Activated naive CD4-positive, alpha-beta T cell treated with anti-CD3 and anti-CD28 coated beads, Interleukin-2, amount 10 ng/mL, durations not matched to agents 7 days and 5 days (primary cell): ENCODE measurements at regions of chr21 and their contacts with region 1.

Region 1: DNA sequence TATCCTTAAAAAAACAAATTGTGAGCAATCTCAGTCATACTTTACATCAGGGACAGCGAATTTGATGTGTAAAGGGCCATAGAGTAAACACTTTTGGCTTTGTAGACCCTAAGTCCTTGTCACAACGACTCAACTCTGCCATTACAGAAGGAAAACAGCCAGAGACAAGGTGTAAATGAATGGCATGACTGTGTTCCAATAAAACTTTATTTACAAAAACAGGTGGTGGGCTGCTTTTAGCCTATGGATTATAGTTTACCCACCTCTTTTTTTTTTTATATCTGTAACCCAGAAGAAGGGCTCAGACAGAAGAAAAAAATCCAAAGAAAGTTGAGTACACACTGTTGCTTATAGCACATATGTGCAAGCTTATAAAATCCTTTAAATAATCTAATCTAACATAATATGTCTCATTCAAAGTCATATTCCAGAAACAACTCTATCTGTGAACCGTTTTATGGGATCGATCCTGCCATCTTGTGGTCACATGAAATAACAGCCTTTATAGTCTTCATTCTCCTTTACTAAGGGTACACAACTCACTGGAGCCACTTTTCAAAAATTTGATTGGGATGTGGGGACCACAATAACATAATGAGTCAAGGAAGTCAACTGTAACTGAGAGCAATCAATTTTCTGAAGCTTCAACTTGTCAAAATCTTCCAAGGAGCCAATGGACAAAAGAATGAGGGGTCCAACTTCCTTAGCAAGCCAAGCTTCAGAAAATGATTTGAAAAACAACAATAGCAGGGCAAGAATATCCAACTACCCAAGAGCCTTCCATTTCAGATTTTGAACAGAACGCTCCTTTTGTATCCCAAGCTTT is 142.2 kb upstream of the KRTAP19-8 start:
- DNase-seq: no peak
- H3K4me3 Mint-ChIP-seq: peak overlapping the region; percentile 77
- H3K27ac Mint-ChIP-seq: peak overlapping the region; percentile 97
- H3K4me1 Mint-ChIP-seq: peaks cover 81% of the 10 kb centered on the region
- H3K27me3 Mint-ChIP-seq: no peaks in the 10 kb centered on the region

Region 2: DNA sequence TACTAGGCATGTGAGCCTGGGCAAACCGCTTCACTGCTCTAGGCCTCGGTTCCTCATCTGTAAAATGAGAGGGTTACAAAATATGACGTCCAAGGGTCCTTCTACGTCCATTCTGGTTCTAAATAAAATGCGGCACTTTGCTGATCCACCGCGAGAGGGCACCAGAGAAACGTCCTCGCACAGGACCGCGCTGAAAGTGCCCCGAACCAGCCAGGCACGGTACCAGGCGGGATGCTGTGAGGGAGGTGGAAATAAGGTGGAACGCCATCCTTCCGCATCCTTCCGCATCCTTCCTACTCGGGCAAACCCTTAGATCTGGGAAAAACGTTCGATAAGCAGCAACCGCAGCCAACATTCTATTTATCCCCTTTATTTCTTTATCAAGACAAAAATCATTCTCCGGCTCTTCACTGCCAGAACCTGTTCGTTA is 81.9 kb before region 1 on chr21:
- CTCF ChIA-PET with region 1: interaction called, 33 read pairs
- DNase-seq: peak; percentile 82
- H3K4me3 Mint-ChIP-seq: no peak overlapping the region
- H3K27ac Mint-ChIP-seq: no peak overlapping the region
- H3K4me1 Mint-ChIP-seq: peaks cover 26% of the 10 kb centered on the region
- H3K27me3 Mint-ChIP-seq: peaks cover 5% of the 10 kb centered on the region

Region 3: GRCh38 chr21:31107871-31108270 is 72.6 kb before region 1 on chr21:
- CTCF ChIA-PET with region 1: interaction called, 35 read pairs
- DNase-seq: no peak
- H3K4me3 Mint-ChIP-seq: no peak overlapping the region
- H3K27ac Mint-ChIP-seq: no peak overlapping the region
- H3K4me1 Mint-ChIP-seq: peaks cover 26% of the 10 kb centered on the region
- H3K27me3 Mint-ChIP-seq: no peaks in the 10 kb centered on the region

Region 4: DNA sequence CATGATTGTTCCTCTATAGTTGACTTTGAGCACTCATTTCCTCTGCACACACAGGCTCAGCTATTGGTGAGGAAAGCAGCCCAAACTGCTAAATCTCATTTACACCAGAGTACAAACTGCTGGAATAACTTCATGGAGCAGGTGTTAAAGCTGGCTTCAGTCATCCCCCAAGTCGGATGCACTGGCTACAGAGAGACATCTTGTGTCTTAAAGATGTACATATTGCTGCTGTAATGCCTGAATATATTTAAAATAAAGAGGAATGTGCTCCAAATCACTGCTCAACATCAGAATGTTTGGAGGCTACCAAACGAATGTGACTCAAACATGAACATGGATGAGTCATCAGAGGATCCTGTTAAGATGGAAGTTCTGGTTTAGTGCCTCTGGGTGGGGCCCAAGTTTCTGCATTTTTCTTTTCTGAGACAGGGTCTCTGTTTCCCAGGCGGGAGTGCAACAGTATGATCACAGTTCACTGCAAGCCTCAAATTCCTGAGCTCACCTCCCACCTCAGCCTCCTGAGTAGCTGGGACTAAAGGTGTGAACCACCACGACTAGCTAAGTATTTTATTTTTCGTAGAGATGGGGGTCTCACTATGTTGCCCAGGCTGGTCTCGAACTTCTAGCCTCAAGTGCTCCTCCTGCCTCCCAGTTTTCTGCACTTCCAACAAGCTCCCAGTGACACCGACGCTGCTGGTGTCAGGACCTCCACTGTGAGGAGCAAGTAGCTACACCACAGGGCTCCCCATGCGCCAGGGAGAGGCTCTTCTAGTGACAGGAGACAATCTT is 63.1 kb before region 1 on chr21:
- CTCF ChIA-PET with region 1: interaction called, 23 read pairs
- DNase-seq: no peak
- H3K4me3 Mint-ChIP-seq: no peak overlapping the region
- H3K27ac Mint-ChIP-seq: peak overlapping the region; percentile 68
- H3K4me1 Mint-ChIP-seq: peaks cover 17% of the 10 kb centered on the region
- H3K27me3 Mint-ChIP-seq: no peaks in the 10 kb centered on the region

Region 5: DNA sequence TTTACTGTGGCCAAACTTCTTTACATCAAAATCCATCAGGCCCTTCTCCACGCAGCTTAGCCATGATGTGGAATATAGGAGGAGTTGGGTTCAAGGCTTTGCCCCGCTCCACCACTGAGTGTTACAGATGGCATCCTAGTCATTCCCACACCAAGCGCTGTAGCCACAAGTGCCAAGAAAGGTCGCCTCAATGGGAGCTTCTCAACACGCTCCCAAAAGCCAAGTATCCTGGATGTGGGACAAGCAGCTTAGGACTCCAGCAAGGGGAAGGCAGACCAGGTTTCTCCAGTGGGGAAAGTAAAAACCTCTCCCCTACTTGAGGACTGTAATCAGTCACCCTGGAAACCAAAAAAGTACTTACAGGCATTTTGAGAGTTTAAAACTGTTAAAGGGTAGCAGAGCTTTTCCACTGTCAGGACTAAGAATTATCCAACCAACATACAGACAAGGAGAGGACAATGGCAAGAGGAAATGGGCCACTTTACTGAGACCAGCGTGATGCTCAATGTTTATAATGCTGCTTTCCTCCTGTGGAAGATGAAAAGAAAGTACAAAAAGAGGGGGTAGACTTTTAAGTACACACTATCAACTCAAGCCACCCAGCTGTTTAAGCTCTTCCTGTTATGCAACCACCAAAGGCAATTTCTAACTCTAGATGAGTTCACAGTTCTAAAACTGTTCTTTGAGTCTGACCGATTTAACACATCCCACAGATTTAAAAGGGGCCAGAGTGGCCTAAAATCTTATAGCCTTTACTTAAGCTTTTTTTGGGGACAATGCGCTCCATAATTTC is 21.5 kb before region 1 on chr21:
- CTCF ChIA-PET with region 1: interaction called, 15 read pairs
- DNase-seq: no peak
- H3K4me3 Mint-ChIP-seq: peak overlapping the region; percentile 33
- H3K27ac Mint-ChIP-seq: peak overlapping the region; percentile 93
- H3K4me1 Mint-ChIP-seq: peaks cover 66% of the 10 kb centered on the region
- H3K27me3 Mint-ChIP-seq: no peaks in the 10 kb centered on the region

Region 6: GRCh38 chr21:31198575-31198974 is 18.1 kb after region 1 on chr21:
- CTCF ChIA-PET with region 1: interaction called, 26 read pairs
- DNase-seq: no peak
- H3K4me3 Mint-ChIP-seq: no peak overlapping the region
- H3K27ac Mint-ChIP-seq: no peak overlapping the region
- H3K4me1 Mint-ChIP-seq: peaks cover 40% of the 10 kb centered on the region
- H3K27me3 Mint-ChIP-seq: no peaks in the 10 kb centered on the region

Region 7: DNA sequence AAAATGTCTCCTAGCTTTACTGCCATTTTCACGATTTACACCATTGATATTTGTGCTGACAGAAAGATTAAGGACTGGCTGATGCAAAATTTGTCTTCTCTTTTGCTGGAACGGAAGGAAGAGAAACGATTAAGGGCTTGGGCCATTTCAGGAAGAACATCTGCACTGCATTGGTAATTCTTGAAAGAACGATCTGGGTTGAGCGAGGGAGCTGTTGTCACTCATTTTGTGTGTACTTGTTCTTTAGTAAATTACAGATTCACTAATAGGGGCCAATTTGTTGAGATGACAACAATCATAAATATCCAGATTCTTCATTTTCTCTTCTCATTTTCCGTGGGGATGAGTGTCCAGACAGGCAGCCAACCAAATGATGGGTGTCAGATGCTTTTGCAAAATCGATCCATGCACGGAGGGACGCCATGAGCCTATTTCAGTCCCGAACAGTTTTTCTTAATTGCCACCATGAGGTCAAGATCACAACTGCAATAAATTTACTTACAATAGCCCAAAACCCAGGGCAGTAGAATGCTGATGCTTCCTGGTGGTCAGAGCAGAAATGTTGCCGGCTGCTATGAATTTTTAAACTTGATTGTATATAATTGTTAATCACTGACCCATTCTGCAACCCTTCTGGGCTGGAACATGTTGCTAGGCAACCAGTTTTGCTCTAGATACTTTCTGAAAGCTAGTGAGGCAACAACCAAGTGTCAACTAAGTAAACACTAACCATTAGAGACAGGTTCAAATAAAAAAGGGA is 296.0 kb after region 1 on chr21:
- CTCF ChIA-PET with region 1: no interaction called
- DNase-seq: no peak
- H3K4me3 Mint-ChIP-seq: no peak overlapping the region
- H3K27ac Mint-ChIP-seq: no peak overlapping the region
- H3K4me1 Mint-ChIP-seq: peaks cover 3% of the 10 kb centered on the region
- H3K27me3 Mint-ChIP-seq: peaks cover 9% of the 10 kb centered on the region